Heart right ventricle (tissue), 16 donors: ENCODE measurements at regions of chr3 and their contacts with region 1.

Region 1: DNA sequence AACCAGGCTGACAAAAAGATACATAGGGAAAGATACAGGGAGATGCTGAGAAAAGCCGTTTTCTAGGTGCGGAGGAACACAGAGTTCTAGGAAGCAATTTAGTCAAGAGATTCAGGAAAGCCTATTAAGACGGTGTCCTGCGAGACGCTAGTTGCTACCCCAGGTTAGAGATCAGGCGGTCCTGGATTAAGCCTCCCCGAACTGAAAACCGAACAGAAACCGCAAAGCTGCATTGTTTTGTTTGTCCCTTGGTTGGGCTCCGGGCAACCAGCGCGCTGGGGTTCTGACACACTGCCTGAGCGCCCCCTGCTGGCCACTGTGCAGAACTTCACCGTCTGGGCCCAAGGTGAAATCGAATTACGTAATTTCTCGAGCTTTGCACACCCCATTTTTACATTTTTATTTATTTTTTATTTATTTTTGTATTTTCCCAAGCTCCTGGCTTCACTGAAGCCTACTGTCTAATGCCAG is 37.3 kb upstream of the NDUFB4 start:
- DNase-seq: peak; percentile 86 to 91
- ATAC-seq: peak; percentile 34 to 74 (median 66)
- H3K4me3 ChIP-seq: peak overlapping the region in 9 of 10 donors; percentile 31 to 57 (median 49)
- H3K27ac ChIP-seq: peak overlapping the region; percentile 66 to 97 (median 84)
- H3K4me1 ChIP-seq: peaks cover 16 to 68% (median 45%) of the 10 kb centered on the region in 9 donors
- H3K27me3 ChIP-seq: no peaks in the 10 kb centered on the region
- CTCF ChIP-seq: peak; percentile 97 to 100 (median 99)

Region 2: GRCh38 chr3:120239644-120240043 is 319.2 kb before region 1 on chr3:
- intact Hi-C with region 1: loop called (anchors 1 to 10 kb)
- DNase-seq: no peak
- ATAC-seq: no peak
- H3K4me3 ChIP-seq: no peak overlapping the region
- H3K27ac ChIP-seq: no peak overlapping the region
- H3K4me1 ChIP-seq: no peaks in the 10 kb centered on the region
- H3K27me3 ChIP-seq: peaks cover 0 to 10% (median 0%) of the 10 kb centered on the region in 7 donors
- CTCF ChIP-seq: no peak

Region 3: DNA sequence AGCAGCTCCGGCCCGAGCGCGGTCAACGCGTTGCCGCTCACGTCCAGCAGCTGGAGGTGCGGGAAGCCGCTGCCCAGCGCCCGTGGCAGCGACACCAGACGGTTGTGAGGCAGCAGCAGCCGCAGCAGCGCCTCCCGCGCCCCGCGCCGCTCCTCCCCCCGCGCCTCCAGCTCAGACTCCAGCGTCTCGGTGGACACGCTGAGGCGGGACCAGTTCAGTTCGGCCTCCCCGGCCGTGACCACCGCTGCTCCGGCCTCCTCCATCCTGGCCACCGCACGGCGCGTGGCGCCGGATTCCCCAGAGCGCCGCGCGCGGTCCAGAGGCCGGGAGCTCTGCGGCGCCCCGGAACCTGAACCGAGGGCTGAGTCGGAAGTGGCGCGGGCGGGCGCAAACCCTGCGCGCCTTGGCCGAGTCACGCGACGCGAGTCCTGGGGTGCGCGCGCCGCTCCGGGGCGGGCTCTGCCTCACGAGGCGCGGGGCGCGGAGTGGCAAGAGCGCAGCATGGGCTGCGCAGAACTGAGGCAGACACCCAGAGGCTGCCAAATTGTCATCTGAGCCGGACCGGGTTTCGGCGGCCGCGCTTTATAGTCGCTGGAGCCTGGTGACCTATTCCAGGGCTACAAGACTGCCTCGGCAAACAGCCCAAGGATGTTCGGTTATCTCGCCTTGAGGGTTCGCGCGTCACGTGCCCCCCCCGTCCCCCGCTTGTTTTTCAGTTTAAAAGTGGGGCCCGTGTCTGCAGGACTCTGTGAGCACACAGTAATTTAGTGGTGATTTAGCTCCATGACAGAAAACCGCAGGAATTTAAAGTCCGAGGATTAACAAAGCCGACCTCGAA is 209.6 kb before region 1 on chr3 and contains the start of gene LRRC58:
- intact Hi-C with region 1: loop called in 5 of 10 experiments (anchors 5 to 10 kb)
- DNase-seq: peak; percentile 85 to 92
- ATAC-seq: peak; percentile 97 to 99 (median 98)
- H3K4me3 ChIP-seq: peak within 1 kb of the TSS; percentile 54 to 98 (median 89)
- H3K27ac ChIP-seq: peak within 1 kb of the TSS; percentile 53 to 94 (median 89)
- H3K4me1 ChIP-seq: peaks cover 0 to 55% (median 13%) of the 10 kb centered on the region in 9 donors
- H3K27me3 ChIP-seq: no peaks in the 10 kb centered on the region
- CTCF ChIP-seq: peak in 6 of 9 donors; percentile 14 to 61 (median 42)
- total RNA-seq, gene LRRC58: 6.9 to 12.1 (median 9.1) TPM

Region 4: DNA sequence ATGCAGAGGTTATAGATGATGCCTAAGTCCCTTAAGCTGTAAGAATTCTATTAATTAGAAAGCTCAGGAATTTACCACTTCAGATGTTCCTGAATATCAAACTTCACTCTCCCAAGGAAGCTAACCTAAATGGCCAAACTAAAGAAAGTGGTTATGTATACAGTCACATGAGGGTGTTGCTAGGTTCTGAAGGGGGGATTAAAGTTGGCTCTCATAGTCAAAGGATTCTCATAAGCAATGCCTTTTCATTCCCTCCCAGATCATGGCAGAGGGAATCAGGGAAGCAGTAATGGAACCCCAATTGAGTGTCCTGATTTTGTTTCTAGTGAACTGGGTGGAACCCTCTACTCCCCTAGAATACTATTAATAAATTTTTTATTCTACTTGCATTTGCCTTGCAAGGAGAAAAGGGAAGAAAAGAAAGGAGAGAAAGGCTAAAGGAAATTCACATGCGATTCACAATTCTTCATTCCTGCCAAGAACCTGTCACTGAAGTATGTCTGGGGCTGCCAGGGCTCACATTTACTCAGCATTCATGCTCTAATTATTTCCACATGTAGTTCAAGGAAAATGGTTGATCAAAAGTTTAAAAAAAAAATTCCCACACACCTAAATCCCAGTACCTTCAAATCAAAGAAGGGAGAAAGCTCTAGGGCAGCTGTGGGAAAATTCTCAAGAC is 133.1 kb before region 1 on chr3:
- intact Hi-C with region 1: loop called in 1 of 10 experiments (anchors 2 kb)
- DNase-seq: no peak
- ATAC-seq: peak in 6 of 8 donors; percentile 24 to 60 (median 43)
- H3K4me3 ChIP-seq: no peak overlapping the region
- H3K27ac ChIP-seq: peak overlapping the region; percentile 29 to 89 (median 86)
- H3K4me1 ChIP-seq: peaks cover 29 to 100% (median 93%) of the 10 kb centered on the region in 9 donors
- H3K27me3 ChIP-seq: no peaks in the 10 kb centered on the region
- CTCF ChIP-seq: no peak

Region 5: GRCh38 chr3:120506828-120507774 is 51.7 kb before region 1 on chr3:
- intact Hi-C with region 1: loop called in 1 of 10 experiments (anchors 5 kb)
- DNase-seq: peak in 1 of 2 donors; percentile 48
- ATAC-seq: peak; percentile 51 to 85 (median 76)
- H3K4me3 ChIP-seq: no peak overlapping the region
- H3K27ac ChIP-seq: peak overlapping the region in 6 of 10 donors; percentile 6 to 40 (median 23)
- H3K4me1 ChIP-seq: peaks cover 5 to 22% (median 16%) of the 10 kb centered on the region in 9 donors
- H3K27me3 ChIP-seq: no peaks in the 10 kb centered on the region
- CTCF ChIP-seq: peak; percentile 46 to 80 (median 70)

Region 6: DNA sequence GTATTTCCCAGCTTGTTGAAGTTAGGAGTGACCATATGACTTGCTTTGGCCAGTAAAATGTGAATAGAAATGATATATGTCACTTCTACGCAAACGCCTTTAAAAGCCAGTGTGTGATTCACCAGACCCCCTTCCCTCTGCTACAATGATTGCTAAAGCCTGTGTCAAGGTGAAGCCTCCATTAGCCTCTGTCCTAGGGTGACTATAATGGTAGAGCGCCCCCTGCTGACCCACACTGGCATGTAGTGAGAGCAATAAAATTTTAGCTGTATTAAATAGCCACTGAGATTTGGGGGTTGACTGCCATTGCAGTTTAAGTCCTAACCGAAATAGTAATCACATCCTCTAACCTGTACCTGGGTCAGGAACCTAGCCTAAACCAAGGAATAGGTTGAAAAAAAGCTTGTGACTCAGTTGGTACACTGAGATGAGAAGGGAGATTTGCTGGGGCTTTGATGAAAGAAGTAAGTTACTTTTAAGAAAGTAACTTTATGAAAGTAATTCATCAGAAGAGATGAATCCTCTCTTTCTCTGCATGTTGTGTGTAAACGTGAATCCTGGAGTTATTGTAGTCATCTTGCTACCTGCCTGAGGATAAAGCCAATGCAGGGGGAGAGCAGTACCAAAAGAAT is 236.3 kb after region 1 on chr3:
- intact Hi-C with region 1: loop called (anchors 1 to 5 kb)
- DNase-seq: peak; percentile 74 to 77
- ATAC-seq: peak; percentile 79 to 94 (median 88)
- H3K4me3 ChIP-seq: no peak overlapping the region
- H3K27ac ChIP-seq: no peak overlapping the region
- H3K4me1 ChIP-seq: no peaks in the 10 kb centered on the region
- H3K27me3 ChIP-seq: no peaks in the 10 kb centered on the region
- CTCF ChIP-seq: peak; percentile 63 to 86 (median 81)